B cell (primary cell): ENCODE measurements at regions of chr5 and their contacts with region 1.

Region 1: GRCh38 chr5:176647030-176647866 is at the start of gene TSPAN17:
- DNase-seq: peak; percentile 99
- ATAC-seq: peak; percentile 97
- H3K4me3 ChIP-seq: peak within 1 kb of the TSS; percentile 12 to 72 (median 64)
- H3K4me3 Mint-ChIP-seq: peak within 1 kb of the TSS; percentile 92
- H3K27ac ChIP-seq: peak within 1 kb of the TSS; percentile 36 to 68
- H3K27ac Mint-ChIP-seq: peak within 1 kb of the TSS; percentile 90
- H3K4me1 ChIP-seq: peaks cover 21 to 52% of the 10 kb centered on the region in 2 donors
- H3K4me1 Mint-ChIP-seq: peaks cover 50% of the 10 kb centered on the region
- H3K27me3 ChIP-seq: no peaks in the 10 kb centered on the region
- H3K27me3 Mint-ChIP-seq: no peaks in the 10 kb centered on the region
- CTCF ChIP-seq: no peak
- total RNA-seq, gene TSPAN17: 21.0 and 23.7 TPM in 2 replicates

Region 2: GRCh38 chr5:176388444-176389134 is 258.7 kb before region 1 on chr5 and contains the starts of genes HIGD2A and NOP16:
- CTCF ChIA-PET with region 1: no interaction called
- POLR2A ChIA-PET with region 1: no interaction called
- intact Hi-C with region 1: loop called (anchors 1 kb)
- DNase-seq: peak; percentile 99
- ATAC-seq: peak; percentile 86
- H3K4me3 ChIP-seq: peak within 1 kb of the TSS; percentile 69 to 98 (median 93)
- H3K4me3 Mint-ChIP-seq: peak within 1 kb of the TSS; percentile 100
- H3K27ac ChIP-seq: peak within 1 kb of the TSS; percentile 90 to 93
- H3K27ac Mint-ChIP-seq: peak within 1 kb of the TSS; percentile 100
- H3K4me1 ChIP-seq: peaks cover 19 to 29% of the 10 kb centered on the region in 2 donors
- H3K4me1 Mint-ChIP-seq: peaks cover 26% of the 10 kb centered on the region
- H3K27me3 ChIP-seq: no peaks in the 10 kb centered on the region
- H3K27me3 Mint-ChIP-seq: no peaks in the 10 kb centered on the region
- CTCF ChIP-seq: no peak
- total RNA-seq, gene HIGD2A: 70.1 and 80.1 TPM in 2 replicates
- total RNA-seq, gene NOP16: 25.0 and 25.1 TPM in 2 replicates

Region 3: GRCh38 chr5:176537608-176538504 is 109.4 kb before region 1 on chr5:
- CTCF ChIA-PET with region 1: interaction called, 7 read pairs
- POLR2A ChIA-PET with region 1: interaction called, 5 read pairs
- intact Hi-C with region 1: loop called (anchors 1 kb)
- DNase-seq: peak; percentile 99
- ATAC-seq: peak; percentile 70
- H3K4me3 ChIP-seq: peak overlapping the region; percentile 84 to 100 (median 94)
- H3K4me3 Mint-ChIP-seq: peak overlapping the region; percentile 99
- H3K27ac ChIP-seq: peak overlapping the region; percentile 93 to 99
- H3K27ac Mint-ChIP-seq: peak overlapping the region; percentile 100
- H3K4me1 ChIP-seq: peaks cover 50 to 59% of the 10 kb centered on the region in 2 donors
- H3K4me1 Mint-ChIP-seq: peaks cover 70% of the 10 kb centered on the region
- H3K27me3 ChIP-seq: no peaks in the 10 kb centered on the region
- H3K27me3 Mint-ChIP-seq: no peaks in the 10 kb centered on the region
- CTCF ChIP-seq: no peak

Region 4: DNA sequence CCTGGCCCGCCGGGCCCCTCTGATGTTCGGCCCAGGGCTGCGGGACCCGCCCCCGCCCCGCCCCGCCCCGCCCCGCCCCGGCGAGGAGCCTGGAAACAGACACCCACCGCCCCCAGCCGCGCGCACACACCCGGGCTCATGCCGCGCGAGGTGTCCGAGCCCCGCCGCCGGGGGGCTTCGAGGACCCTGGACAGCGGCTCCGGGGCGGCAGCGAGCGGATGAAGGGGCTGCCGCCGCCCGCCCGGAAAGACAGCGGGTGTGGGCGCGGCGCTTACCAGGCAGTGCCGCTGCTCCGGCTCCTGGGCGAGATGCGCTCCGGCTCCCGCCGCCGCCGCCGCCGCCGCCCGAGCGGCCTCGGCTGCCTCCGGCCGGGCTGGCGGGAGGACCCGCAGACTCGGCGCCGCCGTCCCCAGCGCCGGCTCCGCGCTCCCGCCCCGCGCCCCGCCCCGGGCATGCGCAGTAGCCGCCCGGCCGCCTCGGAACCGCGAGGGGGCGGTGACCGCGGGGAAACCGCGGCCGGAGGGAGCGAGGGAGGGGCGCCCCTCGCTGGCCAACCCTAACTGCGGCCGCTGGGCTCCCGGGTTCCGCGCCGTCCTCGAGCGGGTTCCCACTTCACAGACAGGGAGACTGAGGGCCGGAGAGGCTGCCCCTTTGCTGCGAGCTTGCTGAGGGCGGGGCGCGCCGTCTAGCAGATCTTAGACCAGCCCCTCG is 37.4 kb before region 1 on chr5 and contains the start of gene GPRIN1:
- CTCF ChIA-PET with region 1: interaction called, 3 read pairs
- POLR2A ChIA-PET with region 1: no interaction called
- intact Hi-C with region 1: loop called (anchors 1 kb)
- DNase-seq: peak; percentile 82
- ATAC-seq: peak; percentile 78
- H3K4me3 ChIP-seq: peak within 1 kb of the TSS; percentile 21 to 78 (median 65)
- H3K4me3 Mint-ChIP-seq: peak within 1 kb of the TSS; percentile 98
- H3K27ac ChIP-seq: no peak within 1 kb of the TSS
- H3K27ac Mint-ChIP-seq: peak within 1 kb of the TSS; percentile 91
- H3K4me1 ChIP-seq: peaks cover 4 to 9% of the 10 kb centered on the region in 2 donors
- H3K4me1 Mint-ChIP-seq: peaks cover 12% of the 10 kb centered on the region
- H3K27me3 ChIP-seq: peaks cover 0 to 22% (median 8%) of the 10 kb centered on the region in 4 experiments
- H3K27me3 Mint-ChIP-seq: peaks cover 24% of the 10 kb centered on the region
- CTCF ChIP-seq: peak; percentile 17
- total RNA-seq, gene GPRIN1: 2.1 and 2.7 TPM in 2 replicates

Region 5: DNA sequence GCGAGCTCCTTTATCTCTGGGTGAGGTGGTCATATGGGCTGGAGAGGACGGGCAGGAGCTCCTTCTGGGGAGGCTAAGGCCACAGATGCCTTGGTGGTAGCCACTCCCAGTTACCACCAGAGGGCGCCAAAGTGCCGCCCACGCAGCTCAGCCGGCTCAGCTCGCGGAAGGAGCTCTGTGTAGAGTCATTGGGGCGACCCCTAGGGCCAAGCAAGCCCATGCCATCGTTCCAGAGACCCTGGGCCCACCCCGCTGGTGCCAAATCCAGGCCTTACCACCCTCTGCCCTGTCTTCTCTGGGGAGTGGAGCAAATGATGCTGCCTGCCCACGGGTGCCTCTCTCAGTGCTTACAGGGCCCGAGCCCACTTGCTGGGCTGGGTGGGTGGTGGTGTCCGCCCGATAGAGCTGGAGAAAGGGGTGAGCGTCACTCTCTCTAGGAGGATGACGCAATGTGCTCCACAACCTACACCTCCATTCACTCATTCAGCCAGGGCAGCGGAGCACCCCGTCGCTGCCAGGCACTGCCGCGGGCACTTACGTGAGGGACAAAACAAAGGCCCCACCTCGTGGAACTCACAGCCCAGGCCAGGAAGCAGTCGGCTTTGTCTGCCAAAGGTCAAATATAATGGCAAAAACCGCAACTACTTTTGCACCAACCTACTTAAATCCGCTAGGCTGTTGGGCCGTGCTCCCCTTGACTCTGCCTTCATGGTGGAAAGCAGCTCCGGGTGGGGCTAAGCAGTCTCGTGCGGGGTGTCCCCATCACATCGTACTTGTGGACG is 13.8 kb after region 1 on chr5:
- CTCF ChIA-PET with region 1: interaction called, 76 read pairs
- POLR2A ChIA-PET with region 1: interaction called, 4 read pairs
- intact Hi-C with region 1: loop called (anchors 1 kb)
- DNase-seq: peak; percentile 89
- ATAC-seq: peak; percentile 76
- H3K4me3 ChIP-seq: no peak overlapping the region
- H3K4me3 Mint-ChIP-seq: no peak overlapping the region
- H3K27ac ChIP-seq: no peak overlapping the region
- H3K27ac Mint-ChIP-seq: peak overlapping the region; percentile 67
- H3K4me1 ChIP-seq: peaks cover 25 to 30% of the 10 kb centered on the region in 2 donors
- H3K4me1 Mint-ChIP-seq: peaks cover 32% of the 10 kb centered on the region
- H3K27me3 ChIP-seq: peaks cover 0 to 16% (median 2%) of the 10 kb centered on the region in 4 experiments
- H3K27me3 Mint-ChIP-seq: peaks cover 23% of the 10 kb centered on the region
- CTCF ChIP-seq: peak; percentile 96